Left cardiac atrium (tissue), 4 donors: ENCODE measurements at regions of chr14 and their contacts with region 1.

Region 1: GRCh38 chr14:68843471-68844209 is 50.8 kb upstream of the ZFP36L1 start:
- DNase-seq: peak; percentile 79
- ATAC-seq: peak; percentile 89 to 93

Region 2: DNA sequence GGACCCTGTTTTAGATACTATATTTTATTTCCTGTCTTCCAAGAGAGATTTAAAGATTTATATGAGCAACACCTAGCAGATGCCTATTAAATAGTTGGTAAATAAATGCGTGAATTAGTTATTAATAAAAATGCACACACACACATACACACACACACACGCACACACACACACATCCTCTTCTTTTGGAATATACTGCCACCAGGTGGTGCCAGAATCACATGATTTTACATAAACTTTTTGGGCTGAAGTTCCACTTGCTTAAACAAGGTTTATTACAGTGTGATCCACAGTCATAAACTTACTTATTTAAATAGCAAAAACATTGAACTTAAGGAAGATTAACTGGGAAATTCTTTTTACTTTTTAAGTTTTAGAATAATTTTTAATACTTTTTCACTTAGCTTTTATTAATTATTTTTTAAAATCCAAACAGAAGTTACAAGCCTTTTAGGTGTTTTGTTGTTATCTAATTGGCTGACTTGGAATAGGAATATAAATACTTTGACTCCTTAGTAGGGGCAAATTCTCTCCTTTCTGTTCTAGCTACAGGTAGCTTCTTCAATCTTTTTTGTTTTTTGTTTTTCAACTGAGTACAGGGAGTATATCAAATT is 1006.5 kb before region 1 on chr14:
- intact Hi-C with region 1: loop called in 1 of 2 experiments (anchors 10 kb)
- DNase-seq: peak; percentile 47
- ATAC-seq: no peak

Region 3: DNA sequence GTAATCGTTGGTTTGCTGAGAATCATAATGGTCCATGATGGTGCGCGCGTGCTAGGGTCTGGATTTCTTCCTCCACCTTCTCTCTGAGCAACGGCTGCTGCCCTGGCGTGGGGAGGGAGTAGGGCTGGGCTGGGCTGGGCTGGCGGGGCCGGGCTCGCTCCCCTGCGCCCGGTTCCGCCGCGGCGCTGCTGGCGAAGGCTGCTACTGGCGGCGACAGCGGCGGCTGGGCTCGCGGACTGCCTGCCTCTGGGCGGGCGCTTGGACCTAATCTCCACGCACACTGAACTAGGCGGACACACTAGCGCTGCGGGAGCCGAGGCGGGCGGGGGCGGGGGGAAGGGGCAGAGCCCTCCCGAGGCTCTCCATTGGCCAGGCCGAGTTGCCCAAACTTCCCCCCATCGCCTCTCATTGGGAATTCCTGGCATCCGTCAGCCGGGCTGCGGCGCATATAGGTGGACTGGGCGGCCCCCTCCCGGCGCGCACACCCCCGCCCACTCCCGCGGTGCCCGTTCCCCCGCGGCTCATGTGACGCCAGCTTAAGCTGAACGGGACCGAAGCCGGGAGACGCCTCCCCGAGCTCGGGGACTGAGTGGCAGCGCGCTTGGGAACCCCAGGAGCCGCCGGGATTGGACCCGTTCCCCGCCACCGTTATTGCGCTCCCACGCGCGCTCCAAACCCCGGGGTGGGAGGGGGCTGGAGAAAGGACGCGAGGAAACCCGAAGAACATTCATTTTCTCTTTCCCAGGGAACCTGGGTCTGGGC is 135.6 kb after region 1 on chr14 and contains the start of gene ACTN1:
- intact Hi-C with region 1: no loop called
- DNase-seq: peak; percentile 96
- ATAC-seq: peak; percentile 83
- total RNA-seq, gene ACTN1: 160 to 319 TPM

Region 4: GRCh38 chr14:69043596-69044260 is 200.1 kb after region 1 on chr14:
- intact Hi-C with region 1: no loop called
- DNase-seq: peak; percentile 51
- ATAC-seq: peak; percentile 42 to 53